ENCODE measurements at regions of chr6 and their contacts with region 1.

Region 1: GRCh38 chr6:41683510-41684310 is 45.4 kb downstream of the MDFI start:
- DNase-seq: peak; percentile 84
- ATAC-seq: peak; percentile 94
- H3K4me3 Mint-ChIP-seq: peak overlapping the region; percentile 68
- H3K27ac Mint-ChIP-seq: peak overlapping the region; percentile 63
- H3K4me1 Mint-ChIP-seq: peaks cover 17% of the 10 kb centered on the region
- H3K27me3 Mint-ChIP-seq: peaks cover 2% of the 10 kb centered on the region

Region 2: DNA sequence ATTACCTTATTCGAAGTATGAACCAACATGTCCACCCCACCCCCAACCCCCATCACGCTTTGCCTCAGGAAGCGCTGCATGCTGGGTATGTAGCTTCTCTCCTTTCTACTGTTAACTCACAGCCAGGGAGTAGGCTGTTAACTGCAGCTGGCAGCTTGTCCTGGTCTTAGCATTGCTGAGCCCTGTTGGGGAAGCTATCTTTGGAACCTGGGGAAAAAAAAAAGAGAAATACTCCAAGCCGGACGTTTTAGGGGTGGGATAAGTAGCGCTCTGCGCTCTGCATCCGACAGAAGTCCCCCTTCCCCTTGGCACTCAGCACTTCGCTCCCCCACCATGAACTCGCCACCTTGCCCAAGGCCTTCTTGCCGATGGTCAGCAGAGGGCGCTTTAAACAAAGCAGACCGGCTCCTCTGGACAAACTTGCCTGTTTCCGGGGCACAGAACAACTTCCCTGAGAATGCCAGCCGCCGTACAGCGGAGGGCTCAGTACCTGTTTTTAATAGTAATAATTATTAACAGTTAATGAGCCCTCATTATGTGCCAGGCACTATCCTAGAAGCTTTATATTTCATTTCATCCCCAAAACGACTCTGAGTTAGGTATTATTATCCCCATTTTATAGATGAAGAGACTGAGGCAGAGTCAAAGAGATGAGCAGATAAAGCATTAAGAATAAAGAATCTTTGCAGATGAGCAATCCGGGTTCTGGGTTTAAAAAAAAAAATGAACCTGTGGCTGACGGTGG is 80.7 kb before region 1 on chr6:
- CTCF ChIA-PET with region 1: interaction called, 74 read pairs
- POLR2A ChIA-PET with region 1: interaction called, 6 read pairs
- DNase-seq: peak; percentile 84
- ATAC-seq: peak; percentile 89
- H3K4me3 Mint-ChIP-seq: no peak overlapping the region
- H3K27ac Mint-ChIP-seq: peak overlapping the region; percentile 18
- H3K4me1 Mint-ChIP-seq: peaks cover 4% of the 10 kb centered on the region
- H3K27me3 Mint-ChIP-seq: peaks cover 3% of the 10 kb centered on the region

Region 3: GRCh38 chr6:41694815-41695526 is 11.3 kb after region 1 on chr6:
- CTCF ChIA-PET with region 1: interaction called, 12 read pairs
- POLR2A ChIA-PET with region 1: no interaction called
- DNase-seq: no peak
- ATAC-seq: no peak
- H3K4me3 Mint-ChIP-seq: no peak overlapping the region
- H3K27ac Mint-ChIP-seq: no peak overlapping the region
- H3K4me1 Mint-ChIP-seq: no peaks in the 10 kb centered on the region
- H3K27me3 Mint-ChIP-seq: no peaks in the 10 kb centered on the region

Region 4: DNA sequence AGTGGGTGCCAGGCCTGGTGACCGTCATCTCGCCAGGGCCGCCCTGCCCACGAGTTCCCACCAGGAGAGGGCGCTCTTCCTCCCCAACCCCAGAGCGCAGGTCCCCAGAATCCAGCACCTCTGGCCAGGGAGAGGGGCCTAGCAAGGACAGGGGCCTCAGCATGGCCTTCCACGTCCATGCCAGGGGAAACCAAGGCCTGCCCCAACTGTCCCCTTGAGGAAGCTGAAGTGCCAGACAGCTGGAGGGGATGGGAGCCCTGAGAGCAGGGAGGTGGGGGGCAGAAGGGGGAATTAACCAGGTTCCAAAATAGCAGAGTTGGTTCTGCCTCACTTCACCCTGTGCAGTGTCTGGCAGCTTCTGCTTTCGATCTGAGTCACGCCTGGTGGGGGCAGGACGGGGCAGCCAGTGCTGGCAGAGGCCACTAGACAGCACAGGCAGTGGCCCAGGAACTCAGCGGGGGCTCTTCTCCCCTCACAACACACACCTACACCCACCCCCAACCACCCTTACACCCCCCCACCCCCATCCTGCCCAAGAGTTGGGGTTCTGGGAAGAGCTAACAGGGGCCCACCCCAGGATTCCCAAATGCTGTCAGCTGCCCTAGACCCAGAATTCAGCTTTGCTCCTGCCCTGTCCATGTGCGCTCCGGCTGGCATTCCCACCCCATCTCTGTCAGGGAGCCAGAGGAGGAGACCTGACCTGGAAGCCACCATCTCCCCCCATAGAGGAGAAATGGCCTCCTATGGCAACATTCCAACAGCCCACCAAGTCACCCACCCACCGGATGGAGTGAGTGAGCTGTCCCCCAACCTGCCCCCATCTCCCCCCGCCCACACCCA is 22.5 kb after region 1 on chr6:
- CTCF ChIA-PET with region 1: interaction called, 15 read pairs
- POLR2A ChIA-PET with region 1: interaction called, 3 read pairs
- DNase-seq: peak; percentile 84
- ATAC-seq: peak; percentile 87
- H3K4me3 Mint-ChIP-seq: no peak overlapping the region
- H3K27ac Mint-ChIP-seq: peak overlapping the region; percentile 93
- H3K4me1 Mint-ChIP-seq: peaks cover 41% of the 10 kb centered on the region
- H3K27me3 Mint-ChIP-seq: no peaks in the 10 kb centered on the region

Region 5: DNA sequence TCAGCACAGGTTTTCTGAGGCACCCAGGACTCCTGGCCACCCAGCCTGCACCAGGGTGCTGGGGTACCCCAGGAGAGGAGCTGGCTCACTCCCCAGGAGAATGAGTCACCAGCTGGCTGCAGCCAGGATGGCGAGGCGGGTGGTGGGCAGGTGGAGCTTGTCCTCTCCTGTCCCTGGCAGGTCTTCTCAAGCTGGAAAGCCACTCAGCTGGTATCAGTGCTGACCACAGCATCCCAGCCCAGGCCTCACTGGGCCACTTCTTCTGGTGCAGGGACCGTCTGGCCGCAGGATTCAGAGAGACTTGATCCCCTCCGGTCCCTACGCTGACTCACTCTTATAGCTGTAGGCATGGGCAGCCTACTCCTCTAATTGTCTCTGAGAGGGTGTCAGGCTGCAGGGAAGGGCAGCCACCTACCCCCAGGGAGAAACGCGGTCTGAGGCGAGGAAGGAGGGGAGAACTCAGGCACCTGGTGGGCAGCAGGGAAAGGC is 29.5 kb after region 1 on chr6:
- CTCF ChIA-PET with region 1: interaction called, 13 read pairs
- POLR2A ChIA-PET with region 1: no interaction called
- DNase-seq: no peak
- ATAC-seq: no peak
- H3K4me3 Mint-ChIP-seq: no peak overlapping the region
- H3K27ac Mint-ChIP-seq: no peak overlapping the region
- H3K4me1 Mint-ChIP-seq: peaks cover 49% of the 10 kb centered on the region
- H3K27me3 Mint-ChIP-seq: no peaks in the 10 kb centered on the region

Region 6: GRCh38 chr6:41735427-41736356 is 52.0 kb after region 1 on chr6 and contains the start of gene TFEB:
- CTCF ChIA-PET with region 1: interaction called, 10 read pairs
- POLR2A ChIA-PET with region 1: interaction called, 3 read pairs
- DNase-seq: peak; percentile 95
- ATAC-seq: peak; percentile 69
- H3K4me3 Mint-ChIP-seq: peak within 1 kb of the TSS; percentile 77
- H3K27ac Mint-ChIP-seq: peak within 1 kb of the TSS; percentile 74
- H3K4me1 Mint-ChIP-seq: peaks cover 34% of the 10 kb centered on the region
- H3K27me3 Mint-ChIP-seq: no peaks in the 10 kb centered on the region
- total RNA-seq, gene TFEB: 18.5 to 21.2 TPM

Region 7: GRCh38 chr6:41767156-41767833 is 83.6 kb after region 1 on chr6:
- CTCF ChIA-PET with region 1: no interaction called
- POLR2A ChIA-PET with region 1: no interaction called
- DNase-seq: no peak
- ATAC-seq: no peak
- H3K4me3 Mint-ChIP-seq: no peak overlapping the region
- H3K27ac Mint-ChIP-seq: no peak overlapping the region
- H3K4me1 Mint-ChIP-seq: peaks cover 16% of the 10 kb centered on the region
- H3K27me3 Mint-ChIP-seq: peaks cover 1% of the 10 kb centered on the region